ENCODE measurements at regions of chr13 and their contacts with region 1.

Region 1: GRCh38 chr13:103188713-103189326 is 122.6 kb upstream of the SLC10A2 start:
- DNase-seq: no peak
- ATAC-seq: peak in 1 of 8 donors; percentile 37
- H3K4me3 ChIP-seq: no peak overlapping the region
- H3K27ac ChIP-seq: no peak overlapping the region
- H3K4me1 ChIP-seq: no peaks in the 10 kb centered on the region
- H3K27me3 ChIP-seq: peaks cover 0 to 5% (median 0%) of the 10 kb centered on the region in 7 donors
- CTCF ChIP-seq: peak in 8 of 9 donors; percentile 26 to 70 (median 57)

Region 2: GRCh38 chr13:103351035-103351828 is 162.4 kb after region 1 on chr13:
- intact Hi-C with region 1: loop called in 1 of 10 experiments (anchors 10 kb)
- DNase-seq: peak; percentile 13 to 23
- ATAC-seq: peak; percentile 29 to 84 (median 74)
- H3K4me3 ChIP-seq: peak overlapping the region in 2 of 10 donors; percentile 14
- H3K27ac ChIP-seq: peak overlapping the region in 9 of 10 donors; percentile 15 to 74 (median 58)
- H3K4me1 ChIP-seq: peaks cover 0 to 28% (median 9%) of the 10 kb centered on the region in 9 donors
- H3K27me3 ChIP-seq: no peaks in the 10 kb centered on the region
- CTCF ChIP-seq: no peak

Region 3: GRCh38 chr13:103788061-103788652 is 599.3 kb after region 1 on chr13:
- intact Hi-C with region 1: loop called in 4 of 10 experiments (anchors 5 to 10 kb)
- DNase-seq: peak; percentile 21 to 25
- ATAC-seq: peak in 7 of 8 donors; percentile 42 to 78 (median 68)
- H3K4me3 ChIP-seq: no peak overlapping the region
- H3K27ac ChIP-seq: no peak overlapping the region
- H3K4me1 ChIP-seq: no peaks in the 10 kb centered on the region
- H3K27me3 ChIP-seq: no peaks in the 10 kb centered on the region
- CTCF ChIP-seq: peak in 7 of 9 donors; percentile 36 to 55 (median 41)

Region 4: DNA sequence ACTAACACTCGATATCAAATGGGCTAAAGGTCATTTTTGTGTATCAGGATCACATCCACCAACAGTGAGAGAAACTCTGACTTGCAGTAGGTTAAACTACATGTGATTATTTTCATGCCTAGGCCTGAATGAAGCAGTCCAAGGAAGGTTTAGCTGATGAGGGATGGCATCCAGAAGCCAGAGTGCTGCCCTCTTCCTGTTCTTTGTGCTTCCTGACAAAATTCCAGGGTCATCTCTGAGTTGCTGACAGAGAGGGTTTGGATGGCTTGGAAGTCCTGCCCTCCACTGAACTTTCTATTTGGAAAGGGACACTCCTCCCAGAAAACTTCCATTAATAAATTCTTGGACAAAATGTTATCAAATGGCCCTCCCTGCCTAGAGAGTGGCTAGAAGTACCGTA is 605.7 kb after region 1 on chr13:
- intact Hi-C with region 1: loop called in 4 of 10 experiments (anchors 5 to 10 kb)
- DNase-seq: no peak
- ATAC-seq: no peak
- H3K4me3 ChIP-seq: no peak overlapping the region
- H3K27ac ChIP-seq: no peak overlapping the region
- H3K4me1 ChIP-seq: no peaks in the 10 kb centered on the region
- H3K27me3 ChIP-seq: no peaks in the 10 kb centered on the region
- CTCF ChIP-seq: no peak

Measured in heart right ventricle (tissue), 16 donors.